ENCODE measurements at regions of chr4 and their contacts with region 1.

Region 1: DNA sequence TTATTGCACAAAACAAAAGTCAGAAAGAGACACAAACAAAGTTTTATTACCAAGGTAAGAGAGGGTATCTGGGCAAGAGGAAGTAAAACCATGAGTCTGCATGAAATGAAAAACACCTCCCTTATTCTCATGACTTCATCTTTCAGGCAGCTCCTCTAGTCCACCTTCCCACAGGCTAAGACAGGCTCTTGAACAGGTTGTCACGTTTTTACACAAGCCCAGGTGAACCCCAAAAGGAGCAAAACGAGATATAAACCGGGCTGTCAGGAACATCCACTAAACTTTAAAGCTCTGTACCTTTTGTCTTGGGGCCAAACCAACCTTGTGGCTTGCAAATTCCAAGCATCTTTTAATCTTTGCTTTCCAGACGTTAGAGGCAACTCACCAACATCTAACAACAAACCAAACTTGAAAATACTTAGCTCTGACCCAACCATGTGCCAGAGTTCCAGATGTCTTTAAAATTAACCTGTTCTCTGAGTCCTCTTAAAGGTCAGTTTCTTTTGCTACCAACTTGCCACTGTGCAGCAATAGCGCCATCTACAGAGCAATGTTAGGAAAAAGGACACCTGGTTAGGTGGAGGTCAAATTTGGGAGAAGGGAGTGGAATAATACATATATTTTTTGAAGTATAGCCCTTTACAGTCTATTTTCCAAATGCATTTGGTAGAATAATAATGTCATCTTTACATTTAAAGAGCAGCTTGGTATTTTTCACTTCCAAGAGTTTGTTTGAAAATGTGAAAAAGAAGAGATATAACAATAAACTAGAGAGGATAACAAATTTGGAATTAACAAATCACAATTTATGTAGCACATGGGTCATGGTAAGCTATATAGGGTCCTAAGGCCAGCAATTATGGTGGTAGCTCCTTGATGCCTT is 73.1 kb downstream of the QRFPR start:
- DNase-seq: peak; percentile 51
- ATAC-seq: peak; percentile 98
- H3K4me3 ChIP-seq: no peak overlapping the region
- H3K27ac ChIP-seq: no peak overlapping the region
- H3K4me1 ChIP-seq: peaks cover 8% of the 10 kb centered on the region
- H3K27me3 ChIP-seq: no peaks in the 10 kb centered on the region; a peak in 1 of 4 replicates
- CTCF ChIP-seq: peak; percentile 80 to 85 (median 83)
- EP300 ChIP-seq: 0 out of 4 replicates have a peak, but pooled peaks of 1 of the 2 experiments have one; percentile 16
- POLR2A ChIP-seq: no peak
- RAD21 ChIP-seq: peak; percentile 99

Region 2: GRCh38 chr4:120025516-120025915 is 1282.2 kb before region 1 on chr4:
- CTCF ChIA-PET with region 1: no interaction called
- POLR2A ChIA-PET with region 1: no interaction called
- RAD21 ChIA-PET with region 1: no interaction called
- SMC1A ChIA-PET with region 1: no interaction called
- in situ Hi-C with region 1: no loop called
- intact Hi-C with region 1: no loop called
- DNase-seq: no peak
- ATAC-seq: no peak
- H3K4me3 ChIP-seq: no peak overlapping the region
- H3K27ac ChIP-seq: no peak overlapping the region
- H3K4me1 ChIP-seq: no peaks in the 10 kb centered on the region
- H3K27me3 ChIP-seq: no peaks in the 10 kb centered on the region
- CTCF ChIP-seq: no peak
- EP300 ChIP-seq: no peak
- POLR2A ChIP-seq: no peak
- RAD21 ChIP-seq: no peak

Region 3: DNA sequence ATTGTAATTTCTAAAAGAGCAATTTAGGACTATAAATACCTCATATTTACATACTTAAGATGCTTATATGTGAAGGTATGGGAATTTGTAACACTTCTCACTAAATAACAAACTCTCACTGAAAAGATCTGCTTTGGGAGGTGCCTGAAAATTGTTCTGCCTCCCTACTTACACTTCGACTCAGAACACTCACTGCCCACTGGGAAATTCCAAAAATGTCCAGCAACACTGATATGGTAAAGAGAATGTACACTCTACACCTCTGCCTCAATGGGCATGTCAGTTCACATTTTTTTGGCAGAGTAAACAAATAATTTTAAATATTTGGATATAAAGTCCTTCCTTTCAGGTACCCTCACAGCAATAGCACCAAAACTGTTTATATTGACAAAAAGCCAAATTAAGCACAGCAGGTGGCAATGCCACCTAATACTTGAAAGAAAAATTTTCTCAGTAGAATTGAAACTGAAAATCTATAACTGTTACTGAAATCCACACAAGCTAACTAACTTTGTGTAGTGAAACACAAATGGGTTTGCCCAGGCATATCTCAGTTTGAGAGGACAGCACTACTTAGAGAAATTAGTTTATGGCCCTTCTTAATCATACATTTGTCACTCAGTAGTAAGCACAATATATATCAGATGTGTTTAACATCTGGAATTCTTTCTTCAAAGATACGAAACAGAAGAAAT is 452.2 kb before region 1 on chr4:
- CTCF ChIA-PET with region 1: no interaction called
- POLR2A ChIA-PET with region 1: no interaction called
- RAD21 ChIA-PET with region 1: no interaction called
- SMC1A ChIA-PET with region 1: no interaction called
- in situ Hi-C with region 1: no loop called
- intact Hi-C with region 1: loop called (anchors 10 kb)
- DNase-seq: peak; percentile 49
- ATAC-seq: peak; percentile 97
- H3K4me3 ChIP-seq: no peak overlapping the region
- H3K27ac ChIP-seq: no peak overlapping the region; the same call in 1 of the 2 replicates
- H3K4me1 ChIP-seq: no peaks in the 10 kb centered on the region; the same call in 1 of the 2 replicates
- H3K27me3 ChIP-seq: peaks cover 0 to 2% of the 10 kb centered on the region in 2 experiments; a peak in 1 of 4 replicates
- CTCF ChIP-seq: peak in 1 of 3 experiments; percentile 6; a peak in 1 of 6 replicates
- EP300 ChIP-seq: no peak; a peak in 1 of 4 replicates
- POLR2A ChIP-seq: no peak
- RAD21 ChIP-seq: 0 out of 2 replicates have a peak, but pooled peaks have one; percentile 16

Region 4: DNA sequence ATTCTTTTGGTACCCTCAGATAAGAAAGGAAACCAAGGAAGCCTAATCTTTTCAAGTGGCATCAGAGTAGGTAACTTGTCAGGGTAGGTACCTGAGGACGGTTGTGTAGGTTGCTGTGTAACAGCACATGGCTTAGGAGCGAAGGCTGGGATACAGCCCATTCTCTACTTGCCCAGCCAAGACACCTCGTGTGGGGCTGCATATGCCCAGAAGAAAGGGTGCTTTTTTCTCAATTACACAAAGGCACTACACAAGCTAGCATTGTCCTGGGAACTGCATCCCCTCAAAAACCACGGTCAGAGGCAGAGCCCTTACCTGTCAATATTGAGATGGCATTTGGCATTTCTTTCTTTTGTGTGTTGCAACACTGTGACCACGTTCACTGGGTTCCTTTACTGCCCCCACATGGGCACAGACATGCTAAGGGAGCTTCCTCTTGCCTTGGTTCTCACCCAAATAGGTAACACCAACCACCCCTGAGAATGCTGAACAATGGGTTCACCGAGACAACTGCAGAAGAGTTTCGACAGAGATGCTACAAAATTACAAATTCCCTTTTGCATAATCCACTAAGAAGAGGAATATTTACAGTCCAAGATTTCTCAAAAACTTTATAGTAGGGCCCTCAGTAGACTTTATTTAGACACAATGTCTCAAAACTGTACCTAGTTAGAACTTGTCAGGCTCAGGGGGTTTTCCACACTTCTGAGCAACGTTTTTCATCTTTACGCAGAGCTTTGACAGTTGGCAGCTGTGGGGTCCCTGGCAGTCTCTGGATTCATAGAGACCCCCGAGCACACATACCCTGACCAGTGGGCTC is 107.7 kb before region 1 on chr4:
- CTCF ChIA-PET with region 1: interaction called, 23 read pairs
- POLR2A ChIA-PET with region 1: interaction called, 3 read pairs
- RAD21 ChIA-PET with region 1: interaction called, 6 read pairs
- SMC1A ChIA-PET with region 1: interaction called, 32 read pairs
- in situ Hi-C with region 1: no loop called
- intact Hi-C with region 1: no loop called
- DNase-seq: peak; percentile 81
- ATAC-seq: peak; percentile 90
- H3K4me3 ChIP-seq: peak overlapping the region; percentile 24; the same call in 1 of the 2 replicates
- H3K27ac ChIP-seq: peak overlapping the region; percentile 76
- H3K4me1 ChIP-seq: peaks cover 20% of the 10 kb centered on the region
- H3K27me3 ChIP-seq: no peaks in the 10 kb centered on the region
- CTCF ChIP-seq: peak; percentile 19 to 33 (median 30); a peak in 4 of 6 replicates
- EP300 ChIP-seq: peak in 1 of 2 experiments; percentile 30; a peak in 1 of 4 replicates
- POLR2A ChIP-seq: no peak
- RAD21 ChIP-seq: peak; percentile 30; the same call in 1 of the 2 replicates

Region 5: DNA sequence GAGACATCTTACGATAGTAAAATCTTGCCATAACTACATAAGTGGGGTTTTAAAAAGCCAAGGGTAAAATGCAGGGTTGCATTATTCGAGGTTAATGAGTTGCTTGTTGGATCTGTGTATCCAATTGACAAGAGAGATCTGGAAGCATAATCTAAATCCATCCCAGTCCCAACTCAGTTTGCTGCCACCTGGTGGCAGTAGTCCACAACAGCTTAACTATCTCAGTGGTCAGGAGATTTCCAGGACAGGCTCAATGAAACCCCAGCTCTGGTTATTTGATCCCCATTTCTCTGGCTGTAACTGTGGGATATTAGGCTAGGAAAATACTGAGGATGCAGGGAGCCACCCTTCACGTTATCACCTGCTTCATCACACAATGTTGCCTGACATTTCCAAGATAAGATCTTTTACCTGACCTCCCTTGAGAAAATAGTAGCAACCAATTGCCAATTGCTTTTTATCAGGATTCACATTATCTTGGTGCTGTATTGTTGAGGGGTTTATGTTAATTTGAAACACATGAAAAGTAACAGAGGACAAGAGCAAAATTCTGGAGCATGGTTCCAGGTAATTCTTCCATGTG is 55.4 kb before region 1 on chr4:
- CTCF ChIA-PET with region 1: interaction called, 26 read pairs
- POLR2A ChIA-PET with region 1: no interaction called
- RAD21 ChIA-PET with region 1: interaction called, 6 read pairs
- SMC1A ChIA-PET with region 1: interaction called, 6 read pairs
- in situ Hi-C with region 1: no loop called
- intact Hi-C with region 1: loop called (anchors 2 kb)
- DNase-seq: no peak
- ATAC-seq: peak; percentile 54
- H3K4me3 ChIP-seq: no peak overlapping the region
- H3K27ac ChIP-seq: no peak overlapping the region
- H3K4me1 ChIP-seq: peaks cover 7% of the 10 kb centered on the region
- H3K27me3 ChIP-seq: no peaks in the 10 kb centered on the region
- CTCF ChIP-seq: peak; percentile 77 to 81 (median 81)
- EP300 ChIP-seq: no peak
- POLR2A ChIP-seq: no peak
- RAD21 ChIP-seq: peak; percentile 77

Region 6: GRCh38 chr4:121277624-121278023 is 30.1 kb before region 1 on chr4:
- CTCF ChIA-PET with region 1: interaction called, 14 read pairs
- POLR2A ChIA-PET with region 1: no interaction called
- RAD21 ChIA-PET with region 1: interaction called, 3 read pairs
- SMC1A ChIA-PET with region 1: interaction called, 15 read pairs
- in situ Hi-C with region 1: no loop called
- intact Hi-C with region 1: loop called (anchors 1 kb)
- DNase-seq: no peak
- ATAC-seq: peak; percentile 93
- H3K4me3 ChIP-seq: no peak overlapping the region
- H3K27ac ChIP-seq: no peak overlapping the region
- H3K4me1 ChIP-seq: peaks cover 11% of the 10 kb centered on the region
- H3K27me3 ChIP-seq: no peaks in the 10 kb centered on the region
- CTCF ChIP-seq: peak; percentile 53 to 64 (median 63)
- EP300 ChIP-seq: no peak
- POLR2A ChIP-seq: no peak
- RAD21 ChIP-seq: peak; percentile 55

Region 7: DNA sequence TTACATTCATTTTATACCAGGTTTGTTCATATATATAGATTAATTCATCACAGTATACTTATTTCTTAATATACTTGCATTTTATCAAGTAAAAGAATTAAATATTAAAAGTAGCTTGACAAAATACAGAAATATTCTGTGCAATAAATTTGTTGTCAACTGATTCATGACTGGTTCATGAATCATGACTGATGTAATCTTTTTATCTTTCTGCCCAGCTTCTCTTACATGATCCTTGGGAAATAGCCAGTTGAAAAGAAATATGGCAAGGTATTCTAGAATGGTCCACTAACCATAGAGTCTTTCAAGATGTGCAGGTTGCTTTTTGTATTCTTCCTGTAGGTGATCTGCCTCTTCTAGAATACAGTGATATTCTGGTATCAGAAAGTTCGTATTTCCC is 520.2 kb after region 1 on chr4:
- CTCF ChIA-PET with region 1: no interaction called
- POLR2A ChIA-PET with region 1: no interaction called
- RAD21 ChIA-PET with region 1: no interaction called
- SMC1A ChIA-PET with region 1: no interaction called
- in situ Hi-C with region 1: no loop called
- intact Hi-C with region 1: no loop called
- DNase-seq: no peak
- ATAC-seq: no peak
- H3K4me3 ChIP-seq: no peak overlapping the region
- H3K27ac ChIP-seq: no peak overlapping the region
- H3K4me1 ChIP-seq: no peaks in the 10 kb centered on the region
- H3K27me3 ChIP-seq: no peaks in the 10 kb centered on the region
- CTCF ChIP-seq: no peak
- EP300 ChIP-seq: no peak
- POLR2A ChIP-seq: no peak
- RAD21 ChIP-seq: no peak